ENCODE measurements at regions of chr12 and their contacts with region 1.

Region 1: DNA sequence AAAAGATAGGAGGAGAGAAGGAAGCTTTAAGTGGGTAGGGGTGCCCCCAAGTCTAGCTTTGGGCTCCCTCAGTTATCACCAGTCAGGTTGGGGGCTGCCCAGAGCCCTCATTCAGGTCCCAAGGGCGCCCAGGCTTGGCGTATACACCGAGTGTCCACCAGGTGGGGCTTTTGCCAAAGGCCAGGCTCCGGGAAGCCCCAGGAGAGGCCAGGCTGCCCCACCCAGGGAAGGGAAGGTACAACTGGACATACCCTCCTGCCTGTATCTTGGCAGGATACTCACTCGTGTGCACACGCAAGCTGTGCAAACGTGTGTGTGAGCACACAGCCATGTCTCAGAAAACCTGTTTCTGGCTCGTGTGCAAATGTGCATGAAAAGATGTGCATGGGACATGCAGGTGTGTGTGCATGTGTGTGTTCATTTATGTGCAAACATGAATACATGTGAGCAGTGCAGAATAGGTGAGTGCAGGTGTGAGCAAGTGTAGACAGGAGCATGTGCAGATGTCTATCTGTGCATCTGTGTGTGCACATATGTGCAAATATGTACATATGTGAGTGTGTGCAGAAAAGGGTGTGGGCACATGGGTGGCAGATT is 103.9 kb upstream of the MYL2 start:
- DNase-seq: peak; percentile 31 to 73 (median 71)
- ATAC-seq: peak; percentile 55 to 68
- H3K4me3 ChIP-seq: no peak overlapping the region
- H3K27ac ChIP-seq: no peak overlapping the region
- H3K4me1 ChIP-seq: no peaks in the 10 kb centered on the region
- H3K27me3 ChIP-seq: no peaks in the 10 kb centered on the region

Region 2: GRCh38 chr12:111298582-111299436 is 274.5 kb after region 1 on chr12:
- intact Hi-C with region 1: loop called (anchors 5 to 10 kb)
- DNase-seq: peak; percentile 34 to 69 (median 66)
- ATAC-seq: peak; percentile 15 to 63
- H3K4me3 ChIP-seq: no peak overlapping the region
- H3K27ac ChIP-seq: no peak overlapping the region
- H3K4me1 ChIP-seq: no peaks in the 10 kb centered on the region
- H3K27me3 ChIP-seq: no peaks in the 10 kb centered on the region

Region 3: DNA sequence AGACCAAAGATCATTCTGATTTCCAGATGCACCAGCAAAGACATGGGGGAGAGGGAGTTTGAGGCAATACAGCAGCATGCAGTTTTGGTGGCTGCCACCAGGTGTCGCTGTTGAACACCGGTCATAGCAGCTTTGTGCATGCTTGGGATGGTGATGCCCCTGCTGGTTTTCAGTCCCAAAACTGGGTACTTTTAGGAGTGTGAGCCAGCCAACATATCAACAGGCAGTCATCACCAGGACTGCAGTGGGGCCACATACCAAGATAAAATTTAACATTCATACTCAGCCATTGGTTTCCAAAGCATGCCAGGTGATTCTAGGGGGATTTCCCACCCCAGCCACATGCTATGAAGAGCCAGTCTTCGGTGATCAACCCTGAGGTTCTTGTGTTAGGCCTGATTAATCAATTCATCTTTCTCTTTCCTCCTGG is 280.4 kb after region 1 on chr12:
- intact Hi-C with region 1: loop called (anchors 5 to 10 kb)
- DNase-seq: no peak
- ATAC-seq: no peak
- H3K4me3 ChIP-seq: no peak overlapping the region
- H3K27ac ChIP-seq: no peak overlapping the region
- H3K4me1 ChIP-seq: no peaks in the 10 kb centered on the region
- H3K27me3 ChIP-seq: no peaks in the 10 kb centered on the region

Region 4: DNA sequence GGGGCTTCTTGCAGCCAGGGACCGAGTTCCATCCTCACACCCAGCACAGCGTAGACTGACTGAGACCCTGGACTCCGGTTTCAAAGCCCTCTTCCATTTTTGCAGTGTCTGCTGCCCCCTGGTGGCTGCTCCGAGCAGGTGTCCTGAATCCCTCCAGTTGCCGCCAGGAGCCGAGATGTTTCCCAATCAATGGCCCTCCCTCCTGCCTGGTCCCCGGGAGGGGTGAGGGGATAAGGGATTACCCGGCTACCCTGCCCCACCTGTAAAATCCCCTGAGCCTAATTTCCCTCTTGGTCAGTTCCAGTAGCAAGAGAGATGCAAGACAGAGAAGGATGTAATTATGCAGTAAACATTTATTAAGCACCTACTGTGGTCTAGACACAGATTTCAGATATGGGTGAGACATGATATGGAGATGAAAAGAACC is 289.5 kb after region 1 on chr12:
- intact Hi-C with region 1: loop called in 2 of 4 experiments (anchors 5 to 10 kb)
- DNase-seq: peak; percentile 73 to 87 (median 84)
- ATAC-seq: peak; percentile 54 to 70
- H3K4me3 ChIP-seq: no peak overlapping the region
- H3K27ac ChIP-seq: no peak overlapping the region
- H3K4me1 ChIP-seq: no peaks in the 10 kb centered on the region
- H3K27me3 ChIP-seq: no peaks in the 10 kb centered on the region